Lower leg skin (tissue), 4 donors: ENCODE measurements at regions of chr10 and their contacts with region 1.

Region 1: DNA sequence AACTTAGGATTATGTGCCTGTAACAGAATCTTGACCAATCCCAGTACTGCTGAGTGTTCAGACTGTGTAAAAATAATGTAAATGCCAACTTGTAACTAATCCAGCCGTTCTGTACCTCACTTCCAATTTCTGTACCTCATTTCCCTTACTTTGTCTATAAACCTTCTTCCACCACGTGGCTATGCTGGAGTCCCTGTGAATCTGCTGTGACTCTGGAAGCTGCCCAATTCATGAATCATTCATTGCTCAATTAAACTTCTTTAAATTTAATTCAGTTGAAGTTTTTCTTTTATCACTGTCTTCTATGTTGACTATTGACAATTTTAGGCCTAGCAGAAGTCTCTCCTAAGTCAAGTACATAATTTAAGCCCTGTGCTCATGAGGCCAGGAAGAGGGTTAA is 215.3 kb upstream of the RHOBTB1 start:
- DNase-seq: no peak
- H3K4me3 ChIP-seq: no peak overlapping the region
- CTCF ChIP-seq: no peak
- POLR2A ChIP-seq: no peak

Region 2: GRCh38 chr10:60618861-60619260 is 540.4 kb before region 1 on chr10:
- intact Hi-C with region 1: no loop called
- DNase-seq: no peak
- H3K4me3 ChIP-seq: no peak overlapping the region
- CTCF ChIP-seq: no peak
- POLR2A ChIP-seq: no peak

Region 3: DNA sequence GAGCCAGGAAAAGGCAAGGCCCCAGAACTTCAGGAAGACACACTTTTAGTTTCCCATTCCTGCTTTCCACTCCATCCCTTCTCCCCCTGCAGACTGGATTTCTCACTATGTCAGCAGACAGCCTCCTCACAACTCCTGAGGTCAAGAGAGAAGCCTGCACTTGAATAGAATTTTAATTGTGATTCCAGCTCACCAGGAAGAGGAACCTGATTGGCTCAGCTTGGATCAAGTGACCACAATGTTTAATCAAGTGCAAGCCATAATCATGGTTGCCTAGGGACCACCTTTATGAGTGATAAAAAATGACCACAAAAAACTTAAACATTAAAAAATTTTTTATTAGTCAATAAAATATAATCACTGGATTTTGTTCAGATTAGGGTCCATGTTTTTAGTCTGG is 29.4 kb after region 1 on chr10:
- intact Hi-C with region 1: loop called (anchors 1 kb)
- DNase-seq: no peak
- H3K4me3 ChIP-seq: no peak overlapping the region
- CTCF ChIP-seq: no peak
- POLR2A ChIP-seq: no peak

Region 4: DNA sequence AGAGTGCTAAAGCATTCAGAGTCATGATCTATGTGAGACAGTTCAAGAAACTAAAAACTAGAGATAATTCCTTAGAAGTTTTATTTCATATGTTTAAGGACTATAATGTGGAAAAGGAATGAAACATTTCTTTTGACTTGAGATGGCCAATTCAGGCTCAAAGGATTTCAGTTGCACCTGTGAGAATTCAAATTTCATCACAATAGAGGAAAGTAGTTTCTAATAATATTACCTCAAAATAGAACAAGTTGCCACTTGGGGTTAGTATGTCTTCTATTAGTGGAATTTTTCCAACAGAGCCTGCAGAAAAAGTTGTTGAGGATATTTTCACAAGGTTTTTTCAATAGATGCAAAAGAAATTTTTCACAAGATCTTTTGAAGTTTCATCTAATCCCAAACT is 256.6 kb after region 1 on chr10:
- intact Hi-C with region 1: no loop called
- DNase-seq: no peak
- H3K4me3 ChIP-seq: no peak overlapping the region
- CTCF ChIP-seq: no peak
- POLR2A ChIP-seq: no peak